ENCODE measurements at regions of chr12 and their contacts with region 1.

Region 1: DNA sequence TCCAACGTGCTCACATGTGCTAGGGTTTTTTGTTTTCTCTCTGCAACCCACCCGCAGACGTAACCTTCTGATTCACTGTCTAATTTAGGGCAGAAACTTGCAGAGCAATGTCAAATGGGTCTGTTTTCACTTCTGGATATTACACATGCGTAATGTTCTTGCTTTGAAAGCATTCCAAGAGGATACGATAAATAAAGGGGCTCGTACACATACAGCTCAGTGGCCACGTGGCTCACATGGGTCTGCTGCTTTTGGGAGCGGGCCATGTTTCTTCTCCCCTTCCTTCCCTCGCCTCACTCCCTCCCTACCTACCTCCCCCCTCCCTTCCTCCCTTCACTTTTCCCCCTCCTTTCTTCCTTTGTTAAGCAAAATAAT is 23.4 kb downstream of the CACNA1C start:
- DNase-seq: peak in 1 of 5 donors; percentile 57
- ATAC-seq: peak; percentile 23 to 47 (median 38)
- H3K4me3 ChIP-seq: peak overlapping the region in 5 of 12 donors; percentile 7 to 23 (median 11)
- H3K27ac ChIP-seq: peak overlapping the region; percentile 77 to 97 (median 88)
- H3K4me1 ChIP-seq: peaks cover 7 to 63% (median 38%) of the 10 kb centered on the region in 12 donors
- H3K27me3 ChIP-seq: no peaks in the 10 kb centered on the region
- CTCF ChIP-seq: no peak
- POLR2A ChIP-seq: no peak

Region 2: DNA sequence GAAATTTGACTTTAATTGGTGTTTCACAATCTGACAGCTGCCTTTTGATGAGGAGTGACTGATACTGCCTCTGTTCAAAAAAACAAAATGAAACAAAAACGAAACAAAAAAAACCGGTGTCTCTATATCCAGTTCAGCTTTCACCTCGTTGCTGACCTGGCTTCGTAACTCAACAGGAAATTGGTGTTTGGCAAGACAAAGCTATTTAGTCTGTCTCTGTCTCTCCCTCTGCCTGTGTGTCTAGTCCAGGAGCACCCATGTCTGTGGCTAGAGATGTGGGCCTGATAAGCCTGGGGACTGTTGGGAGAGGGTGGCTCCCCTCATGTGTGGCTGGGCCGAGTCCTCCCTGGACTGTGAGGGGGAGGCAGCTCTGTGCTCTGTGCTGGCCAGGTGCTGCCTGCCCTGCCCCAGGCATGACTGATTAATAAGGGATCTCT is 12.1 kb before region 1 on chr12:
- intact Hi-C with region 1: no loop called
- DNase-seq: no peak
- ATAC-seq: peak in 3 of 4 donors; percentile 28 to 44 (median 30)
- H3K4me3 ChIP-seq: peak overlapping the region in 6 of 12 donors; percentile 1 to 37 (median 18)
- H3K27ac ChIP-seq: peak overlapping the region in 11 of 12 donors; percentile 18 to 91 (median 62)
- H3K4me1 ChIP-seq: peaks cover 0 to 77% (median 32%) of the 10 kb centered on the region in 12 donors
- H3K27me3 ChIP-seq: no peaks in the 10 kb centered on the region
- CTCF ChIP-seq: no peak
- POLR2A ChIP-seq: no peak

Region 3: GRCh38 chr12:2113119-2113912 is 37.1 kb after region 1 on chr12:
- intact Hi-C with region 1: loop called in 3 of 10 experiments (anchors 5 kb)
- DNase-seq: peak; percentile 63 to 90 (median 73)
- ATAC-seq: peak; percentile 77 to 84 (median 80)
- H3K4me3 ChIP-seq: no peak overlapping the region
- H3K27ac ChIP-seq: peak overlapping the region; percentile 60 to 86 (median 80)
- H3K4me1 ChIP-seq: peaks cover 3 to 90% (median 52%) of the 10 kb centered on the region in 12 donors
- H3K27me3 ChIP-seq: no peaks in the 10 kb centered on the region
- CTCF ChIP-seq: no peak
- POLR2A ChIP-seq: no peak

Region 4: GRCh38 chr12:2154050-2154449 is 77.9 kb after region 1 on chr12:
- intact Hi-C with region 1: loop called in 2 of 10 experiments (anchors 5 kb)
- DNase-seq: no peak
- ATAC-seq: peak in 3 of 4 donors; percentile 41 to 61 (median 50)
- H3K4me3 ChIP-seq: no peak overlapping the region
- H3K27ac ChIP-seq: peak overlapping the region in 11 of 12 donors; percentile 50 to 82 (median 73)
- H3K4me1 ChIP-seq: peaks cover 4 to 86% (median 58%) of the 10 kb centered on the region in 12 donors
- H3K27me3 ChIP-seq: no peaks in the 10 kb centered on the region
- CTCF ChIP-seq: no peak
- POLR2A ChIP-seq: no peak

Region 5: GRCh38 chr12:2163172-2163941 is 87.2 kb after region 1 on chr12:
- intact Hi-C with region 1: loop called in 1 of 10 experiments (anchors 5 kb)
- DNase-seq: peak; percentile 91 to 95 (median 93)
- ATAC-seq: peak; percentile 79 to 94 (median 91)
- H3K4me3 ChIP-seq: no peak overlapping the region
- H3K27ac ChIP-seq: peak overlapping the region; percentile 60 to 86 (median 82)
- H3K4me1 ChIP-seq: peaks cover 4 to 67% (median 43%) of the 10 kb centered on the region in 12 donors
- H3K27me3 ChIP-seq: no peaks in the 10 kb centered on the region
- CTCF ChIP-seq: peak in 4 of 12 donors; percentile 5 to 14 (median 8)
- POLR2A ChIP-seq: no peak

Region 6: GRCh38 chr12:2179953-2180736 is 104.0 kb after region 1 on chr12:
- intact Hi-C with region 1: loop called in 2 of 10 experiments (anchors 5 to 10 kb)
- DNase-seq: peak; percentile 51 to 91 (median 81)
- ATAC-seq: peak; percentile 80 to 89 (median 88)
- H3K4me3 ChIP-seq: no peak overlapping the region
- H3K27ac ChIP-seq: peak overlapping the region; percentile 56 to 90 (median 78)
- H3K4me1 ChIP-seq: peaks cover 9 to 70% (median 46%) of the 10 kb centered on the region in 12 donors
- H3K27me3 ChIP-seq: no peaks in the 10 kb centered on the region
- CTCF ChIP-seq: no peak
- POLR2A ChIP-seq: no peak

Region 7: GRCh38 chr12:2239381-2239871 is 163.2 kb after region 1 on chr12:
- intact Hi-C with region 1: loop called in 1 of 10 experiments (anchors 5 kb)
- DNase-seq: peak in 4 of 5 donors; percentile 72 to 84 (median 78)
- ATAC-seq: peak; percentile 59 to 75 (median 70)
- H3K4me3 ChIP-seq: peak overlapping the region in 4 of 12 donors; percentile 13 to 29 (median 18)
- H3K27ac ChIP-seq: peak overlapping the region; percentile 78 to 92 (median 86)
- H3K4me1 ChIP-seq: peaks cover 12 to 96% (median 59%) of the 10 kb centered on the region in 12 donors
- H3K27me3 ChIP-seq: no peaks in the 10 kb centered on the region
- CTCF ChIP-seq: no peak
- POLR2A ChIP-seq: peak in 1 of 2 donors; percentile 37